ENCODE measurements at regions of chr16 and their contacts with region 1.

Region 1: GRCh38 chr16:31142109-31143010 is 6.8 kb upstream of the PRSS8 start:
- DNase-seq: peak; percentile 99
- ATAC-seq: peak; percentile 99
- H3K4me3 Mint-ChIP-seq: peak overlapping the region; percentile 67
- H3K27ac Mint-ChIP-seq: peak overlapping the region; percentile 87
- H3K4me1 Mint-ChIP-seq: peaks cover 7% of the 10 kb centered on the region
- H3K27me3 Mint-ChIP-seq: no peaks in the 10 kb centered on the region
- CTCF ChIP-seq: peak; percentile 72

Region 2: GRCh38 chr16:30956601-30957455 is 185.5 kb before region 1 on chr16:
- CTCF ChIA-PET with region 1: interaction called, 16 read pairs
- POLR2A ChIA-PET with region 1: interaction called, 3 read pairs
- intact Hi-C with region 1: no loop called
- DNase-seq: peak; percentile 95
- ATAC-seq: peak; percentile 83
- H3K4me3 Mint-ChIP-seq: peak overlapping the region; percentile 89
- H3K27ac Mint-ChIP-seq: peak overlapping the region; percentile 99
- H3K4me1 Mint-ChIP-seq: peaks cover 37% of the 10 kb centered on the region
- H3K27me3 Mint-ChIP-seq: no peaks in the 10 kb centered on the region
- CTCF ChIP-seq: no peak

Region 3: GRCh38 chr16:31073968-31074813 is 68.2 kb before region 1 on chr16 and contains the starts of genes ZNF646 and ZNF668:
- CTCF ChIA-PET with region 1: interaction called, 7 read pairs
- POLR2A ChIA-PET with region 1: interaction called, 15 read pairs
- intact Hi-C with region 1: no loop called
- DNase-seq: peak; percentile 100
- ATAC-seq: peak; percentile 80
- H3K4me3 Mint-ChIP-seq: peak within 1 kb of the TSS; percentile 96
- H3K27ac Mint-ChIP-seq: peak within 1 kb of the TSS; percentile 98
- H3K4me1 Mint-ChIP-seq: peaks cover 43% of the 10 kb centered on the region
- H3K27me3 Mint-ChIP-seq: no peaks in the 10 kb centered on the region
- CTCF ChIP-seq: no peak
- total RNA-seq, gene ZNF646: 22.0 to 24.4 TPM
- total RNA-seq, gene ZNF668: 16.2 to 18.8 TPM

Region 4: GRCh38 chr16:31117391-31118197 is 24.8 kb before region 1 on chr16 and contains the start of gene KAT8:
- CTCF ChIA-PET with region 1: interaction called, 16 read pairs
- POLR2A ChIA-PET with region 1: interaction called, 12 read pairs
- intact Hi-C with region 1: no loop called
- DNase-seq: peak; percentile 99
- ATAC-seq: peak; percentile 95
- H3K4me3 Mint-ChIP-seq: peak within 1 kb of the TSS; percentile 87
- H3K27ac Mint-ChIP-seq: peak within 1 kb of the TSS; percentile 86
- H3K4me1 Mint-ChIP-seq: peaks cover 23% of the 10 kb centered on the region
- H3K27me3 Mint-ChIP-seq: no peaks in the 10 kb centered on the region
- CTCF ChIP-seq: no peak
- total RNA-seq, gene KAT8: 55.6 to 58.7 TPM

Region 5: GRCh38 chr16:31157136-31157535 is 14.8 kb after region 1 on chr16:
- CTCF ChIA-PET with region 1: interaction called, 19 read pairs
- POLR2A ChIA-PET with region 1: interaction called, 5 read pairs
- intact Hi-C with region 1: no loop called
- DNase-seq: no peak
- ATAC-seq: no peak
- H3K4me3 Mint-ChIP-seq: peak overlapping the region; percentile 40
- H3K27ac Mint-ChIP-seq: no peak overlapping the region
- H3K4me1 Mint-ChIP-seq: peaks cover 9% of the 10 kb centered on the region
- H3K27me3 Mint-ChIP-seq: peaks cover 2% of the 10 kb centered on the region
- CTCF ChIP-seq: no peak

Measured in activated CD8-positive, alpha-beta T cell treated with anti-CD3 and anti-CD28 coated beads for 36 hours (primary cell).